AG04449 (cell line): ENCODE measurements at regions of chr1 and their contacts with region 1.

Region 1: GRCh38 chr1:156226116-156226538 is 13.3 kb downstream of the PMF1 start:
- DNase-seq: no peak
- H3K4me3 ChIP-seq: no peak overlapping the region
- CTCF ChIP-seq: no peak

Region 2: GRCh38 chr1:156104065-156104810 is 121.9 kb before region 1 on chr1:
- CTCF ChIA-PET with region 1: interaction called, 15 read pairs
- POLR2A ChIA-PET with region 1: no interaction called
- DNase-seq: no peak
- H3K4me3 ChIP-seq: peak overlapping the region; percentile 29
- CTCF ChIP-seq: no peak

Region 3: DNA sequence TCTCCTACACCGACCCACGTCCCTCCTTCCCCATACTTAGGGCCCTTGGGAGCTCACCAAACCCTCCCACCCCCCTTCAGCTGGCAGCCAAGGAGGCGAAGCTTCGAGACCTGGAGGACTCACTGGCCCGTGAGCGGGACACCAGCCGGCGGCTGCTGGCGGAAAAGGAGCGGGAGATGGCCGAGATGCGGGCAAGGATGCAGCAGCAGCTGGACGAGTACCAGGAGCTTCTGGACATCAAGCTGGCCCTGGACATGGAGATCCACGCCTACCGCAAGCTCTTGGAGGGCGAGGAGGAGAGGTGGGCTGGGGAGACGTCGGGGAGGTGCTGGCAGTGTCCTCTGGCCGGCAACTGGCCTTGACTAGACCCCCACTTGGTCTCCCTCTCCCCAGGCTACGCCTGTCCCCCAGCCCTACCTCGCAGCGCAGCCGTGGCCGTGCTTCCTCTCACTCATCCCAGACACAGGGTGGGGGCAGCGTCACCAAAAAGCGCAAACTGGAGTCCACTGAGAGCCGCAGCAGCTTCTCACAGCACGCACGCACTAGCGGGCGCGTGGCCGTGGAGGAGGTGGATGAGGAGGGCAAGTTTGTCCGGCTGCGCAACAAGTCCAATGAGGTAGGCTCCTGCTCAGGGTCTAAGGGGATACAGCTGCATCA is 90.2 kb before region 1 on chr1:
- CTCF ChIA-PET with region 1: interaction called, 214 read pairs
- POLR2A ChIA-PET with region 1: no interaction called
- DNase-seq: no peak
- H3K4me3 ChIP-seq: no peak overlapping the region
- CTCF ChIP-seq: no peak

Region 4: GRCh38 chr1:156154317-156154749 is 71.8 kb before region 1 on chr1:
- CTCF ChIA-PET with region 1: interaction called, 214 read pairs
- POLR2A ChIA-PET with region 1: interaction called, 4 read pairs
- DNase-seq: no peak
- H3K4me3 ChIP-seq: no peak overlapping the region
- CTCF ChIP-seq: no peak

Region 5: GRCh38 chr1:156193488-156194299 is 32.4 kb before region 1 on chr1 and contains the start of gene SLC25A44:
- CTCF ChIA-PET with region 1: interaction called, 12 read pairs
- POLR2A ChIA-PET with region 1: interaction called, 3 read pairs
- DNase-seq: peak; percentile 94
- H3K4me3 ChIP-seq: peak within 1 kb of the TSS; percentile 98
- CTCF ChIP-seq: peak; percentile 42

Region 6: DNA sequence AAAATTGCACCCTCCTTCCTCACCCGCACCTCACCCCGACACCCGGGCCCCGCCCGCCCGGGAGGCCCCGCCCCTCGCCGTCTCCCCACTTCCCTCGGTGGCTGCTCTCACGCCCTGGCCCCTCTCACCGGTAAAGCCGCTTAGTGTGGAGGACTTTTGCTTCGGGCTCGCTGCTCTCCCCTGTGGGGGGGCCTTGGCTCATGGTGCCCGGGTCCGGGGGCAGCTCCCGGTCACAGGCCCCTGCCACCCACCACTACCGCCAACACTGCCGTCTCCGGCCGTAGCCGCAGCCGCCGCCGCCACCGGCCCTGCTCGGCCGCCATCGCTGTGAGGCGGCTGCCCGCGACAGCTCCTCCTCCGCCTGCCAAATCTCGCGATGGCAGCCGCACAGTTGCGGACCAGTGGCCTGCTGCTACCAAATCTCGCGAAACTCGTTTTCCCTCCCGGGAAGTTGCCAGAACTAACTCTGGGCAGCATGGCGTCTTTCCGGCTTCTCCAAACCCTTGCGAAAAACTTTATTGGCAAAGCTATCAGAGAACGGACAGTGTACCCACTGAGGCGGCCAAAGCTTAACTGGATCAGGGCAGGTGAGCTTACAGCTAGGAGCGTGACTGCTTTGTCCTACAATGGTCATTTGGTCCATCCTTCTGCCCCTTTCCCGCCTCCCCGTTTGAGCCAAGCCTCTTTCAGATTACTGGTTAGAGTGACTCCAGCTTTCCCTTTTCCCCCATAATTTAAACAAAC is 56.5 kb after region 1 on chr1 and contains the start of gene SMG5:
- CTCF ChIA-PET with region 1: interaction called, 10 read pairs
- POLR2A ChIA-PET with region 1: no interaction called
- DNase-seq: peak; percentile 93
- H3K4me3 ChIP-seq: peak within 1 kb of the TSS; percentile 86
- CTCF ChIP-seq: no peak